ENCODE measurements at regions of chr17 and their contacts with region 1.

Region 1: DNA sequence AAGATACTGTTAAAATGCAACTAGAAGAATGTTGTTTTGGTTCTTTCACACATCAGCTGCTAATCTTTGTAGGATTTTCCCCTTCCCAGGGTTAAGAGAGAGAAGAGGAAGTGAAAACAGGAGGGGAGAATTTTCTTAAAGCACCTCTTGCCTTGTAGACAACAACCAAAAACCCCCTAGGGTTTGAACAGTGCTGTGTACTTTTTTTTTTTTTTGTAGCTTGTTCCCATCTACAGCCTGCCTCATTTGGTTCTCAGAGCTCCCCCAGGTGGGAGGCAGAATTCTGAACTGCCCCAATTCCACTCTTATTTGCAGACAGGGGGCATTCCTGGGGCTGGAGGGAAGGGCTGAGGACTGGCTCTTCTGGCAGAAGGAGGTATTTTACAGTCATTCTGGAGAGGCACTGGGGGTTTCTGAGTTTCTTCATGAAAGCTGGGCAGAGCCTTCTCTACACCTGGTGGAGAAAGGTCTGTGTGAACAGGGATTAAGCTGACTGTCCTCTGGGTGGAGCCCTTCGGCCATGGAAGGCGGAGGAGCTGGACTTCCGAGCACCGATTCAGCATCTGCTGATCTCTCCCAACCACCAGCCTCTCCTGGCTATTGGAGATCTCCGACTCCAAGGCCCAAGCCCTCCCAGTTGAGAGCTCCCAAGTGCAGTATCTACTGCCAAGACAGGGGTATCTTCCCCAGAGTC is 32.2 kb downstream of the SMARCE1 start:
- DNase-seq: peak; percentile 58
- ATAC-seq: peak; percentile 83
- H3K4me3 Mint-ChIP-seq: peak overlapping the region; percentile 77
- H3K27ac Mint-ChIP-seq: peak overlapping the region; percentile 96
- H3K4me1 Mint-ChIP-seq: peaks cover 81% of the 10 kb centered on the region
- H3K27me3 Mint-ChIP-seq: no peaks in the 10 kb centered on the region
- CTCF ChIP-seq: no peak

Region 2: DNA sequence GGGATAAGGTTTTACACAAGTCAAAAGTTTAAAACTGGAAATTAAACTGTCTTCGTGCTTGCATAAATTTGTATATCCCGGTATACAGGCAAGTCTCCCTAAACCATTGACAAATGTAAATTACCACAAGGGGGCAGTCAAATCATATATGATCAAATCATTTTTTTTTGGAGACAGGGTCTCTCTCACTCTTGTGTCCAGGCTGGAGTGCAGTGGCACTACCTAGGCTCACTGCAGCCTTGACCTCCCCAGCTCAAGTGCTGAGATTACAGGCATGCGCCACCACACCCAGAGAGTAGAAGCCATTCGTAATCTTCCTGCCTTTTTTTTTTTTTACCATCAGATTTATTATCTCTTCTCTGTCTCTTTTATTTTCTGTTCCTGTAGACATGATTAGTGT is 216.3 kb before region 1 on chr17:
- CTCF ChIA-PET with region 1: interaction called, 5 read pairs
- POLR2A ChIA-PET with region 1: interaction called, 4 read pairs
- intact Hi-C with region 1: loop called (anchors 1 kb)
- DNase-seq: no peak
- ATAC-seq: peak; percentile 61
- H3K4me3 Mint-ChIP-seq: no peak overlapping the region
- H3K27ac Mint-ChIP-seq: no peak overlapping the region
- H3K4me1 Mint-ChIP-seq: peaks cover 15% of the 10 kb centered on the region
- H3K27me3 Mint-ChIP-seq: no peaks in the 10 kb centered on the region
- CTCF ChIP-seq: no peak

Region 3: DNA sequence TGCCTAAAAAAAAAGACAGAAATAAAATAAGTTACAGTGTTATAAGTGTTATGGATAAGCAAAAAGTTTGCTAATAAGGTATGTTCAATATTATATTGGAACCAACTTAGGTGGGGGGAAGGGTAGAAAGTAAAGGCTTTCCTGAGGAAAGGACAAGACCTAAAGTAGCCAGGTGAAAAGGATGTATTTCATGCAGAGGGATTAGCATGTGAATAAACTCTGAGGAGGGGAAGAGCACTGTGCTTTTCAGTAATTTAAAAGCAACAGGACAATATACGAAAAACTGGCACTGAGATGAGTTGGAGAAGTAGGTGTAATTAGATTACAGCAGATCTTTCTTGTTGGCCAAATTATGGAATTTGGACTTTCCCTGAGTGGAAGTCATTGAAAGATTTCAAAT is 205.4 kb before region 1 on chr17:
- CTCF ChIA-PET with region 1: no interaction called
- POLR2A ChIA-PET with region 1: no interaction called
- intact Hi-C with region 1: no loop called
- DNase-seq: no peak
- ATAC-seq: no peak
- H3K4me3 Mint-ChIP-seq: no peak overlapping the region
- H3K27ac Mint-ChIP-seq: no peak overlapping the region
- H3K4me1 Mint-ChIP-seq: no peaks in the 10 kb centered on the region
- H3K27me3 Mint-ChIP-seq: no peaks in the 10 kb centered on the region
- CTCF ChIP-seq: no peak

Region 4: GRCh38 chr17:40531051-40531991 is 84.1 kb before region 1 on chr17:
- CTCF ChIA-PET with region 1: interaction called, 64 read pairs
- POLR2A ChIA-PET with region 1: interaction called, 117 read pairs
- intact Hi-C with region 1: loop called (anchors 1 kb)
- DNase-seq: no peak
- ATAC-seq: peak; percentile 26
- H3K4me3 Mint-ChIP-seq: peak overlapping the region; percentile 42
- H3K27ac Mint-ChIP-seq: peak overlapping the region; percentile 93
- H3K4me1 Mint-ChIP-seq: peaks cover 61% of the 10 kb centered on the region
- H3K27me3 Mint-ChIP-seq: no peaks in the 10 kb centered on the region
- CTCF ChIP-seq: no peak

Region 5: GRCh38 chr17:40564883-40565768 is 50.3 kb before region 1 on chr17 and contains the start of gene CCR7:
- CTCF ChIA-PET with region 1: interaction called, 426 read pairs
- POLR2A ChIA-PET with region 1: interaction called, 1,885 read pairs
- intact Hi-C with region 1: loop called (anchors 1 kb)
- DNase-seq: peak; percentile 78
- ATAC-seq: peak; percentile 66
- H3K4me3 Mint-ChIP-seq: peak within 1 kb of the TSS; percentile 89
- H3K27ac Mint-ChIP-seq: peak within 1 kb of the TSS; percentile 99
- H3K4me1 Mint-ChIP-seq: peaks cover 74% of the 10 kb centered on the region
- H3K27me3 Mint-ChIP-seq: no peaks in the 10 kb centered on the region
- CTCF ChIP-seq: no peak
- total RNA-seq, gene CCR7: 572 and 573 TPM in 2 replicates

Region 6: DNA sequence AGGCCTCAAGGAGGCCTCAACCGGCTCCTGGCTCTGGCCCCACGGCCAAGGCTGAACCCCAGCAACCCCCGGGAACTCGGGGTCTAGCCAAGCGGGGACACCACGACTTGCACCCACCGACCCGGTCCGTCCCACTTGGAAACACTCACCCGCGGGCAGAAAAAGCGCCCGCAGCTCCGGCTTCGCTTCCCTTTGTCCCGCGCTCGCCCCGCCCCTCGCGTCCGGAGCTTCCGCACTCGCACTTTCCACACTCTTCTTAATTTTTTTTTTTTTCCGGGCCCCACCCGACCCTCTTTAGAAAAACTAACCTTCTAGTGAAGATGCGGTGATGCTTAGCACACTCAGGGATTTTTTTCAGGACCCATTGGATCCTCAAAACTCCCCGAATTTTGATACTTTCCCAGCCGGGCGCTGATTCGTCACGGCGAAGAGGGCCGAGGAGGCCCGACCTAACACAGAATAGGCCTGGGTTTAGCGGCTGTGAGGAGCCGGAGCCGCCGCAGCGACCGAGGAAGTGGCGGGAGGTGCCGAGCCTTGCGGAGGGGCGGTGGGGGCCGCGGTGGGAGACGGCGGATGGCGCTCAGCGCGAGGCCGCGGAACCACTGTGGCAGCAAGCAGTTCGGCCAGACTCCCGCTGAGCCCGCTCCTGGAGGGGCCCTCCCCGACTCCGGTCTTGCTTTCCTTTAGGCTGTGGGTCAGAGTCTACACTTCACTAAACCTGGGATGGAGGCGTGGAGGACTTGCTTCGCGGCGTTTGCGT is 32.4 kb after region 1 on chr17 and contains the start of gene SMARCE1:
- CTCF ChIA-PET with region 1: interaction called, 7 read pairs
- POLR2A ChIA-PET with region 1: interaction called, 85 read pairs
- intact Hi-C with region 1: no loop called
- DNase-seq: peak; percentile 75
- ATAC-seq: peak; percentile 84
- H3K4me3 Mint-ChIP-seq: peak within 1 kb of the TSS; percentile 98
- H3K27ac Mint-ChIP-seq: peak within 1 kb of the TSS; percentile 99
- H3K4me1 Mint-ChIP-seq: peaks cover 48% of the 10 kb centered on the region
- H3K27me3 Mint-ChIP-seq: no peaks in the 10 kb centered on the region
- CTCF ChIP-seq: no peak
- total RNA-seq, gene SMARCE1: 140 TPM in 2 replicates

Region 7: GRCh38 chr17:40659911-40660310 is 44.5 kb after region 1 on chr17:
- CTCF ChIA-PET with region 1: no interaction called
- POLR2A ChIA-PET with region 1: no interaction called
- intact Hi-C with region 1: no loop called
- DNase-seq: no peak
- ATAC-seq: no peak
- H3K4me3 Mint-ChIP-seq: no peak overlapping the region
- H3K27ac Mint-ChIP-seq: no peak overlapping the region
- H3K4me1 Mint-ChIP-seq: peaks cover 3% of the 10 kb centered on the region
- H3K27me3 Mint-ChIP-seq: peaks cover 29% of the 10 kb centered on the region
- CTCF ChIP-seq: no peak

Region 8: GRCh38 chr17:40763752-40764151 is 148.3 kb after region 1 on chr17:
- CTCF ChIA-PET with region 1: no interaction called
- POLR2A ChIA-PET with region 1: no interaction called
- intact Hi-C with region 1: no loop called
- DNase-seq: no peak
- ATAC-seq: no peak
- H3K4me3 Mint-ChIP-seq: no peak overlapping the region
- H3K27ac Mint-ChIP-seq: no peak overlapping the region
- H3K4me1 Mint-ChIP-seq: no peaks in the 10 kb centered on the region
- H3K27me3 Mint-ChIP-seq: peaks cover 21% of the 10 kb centered on the region
- CTCF ChIP-seq: no peak

Region 9: DNA sequence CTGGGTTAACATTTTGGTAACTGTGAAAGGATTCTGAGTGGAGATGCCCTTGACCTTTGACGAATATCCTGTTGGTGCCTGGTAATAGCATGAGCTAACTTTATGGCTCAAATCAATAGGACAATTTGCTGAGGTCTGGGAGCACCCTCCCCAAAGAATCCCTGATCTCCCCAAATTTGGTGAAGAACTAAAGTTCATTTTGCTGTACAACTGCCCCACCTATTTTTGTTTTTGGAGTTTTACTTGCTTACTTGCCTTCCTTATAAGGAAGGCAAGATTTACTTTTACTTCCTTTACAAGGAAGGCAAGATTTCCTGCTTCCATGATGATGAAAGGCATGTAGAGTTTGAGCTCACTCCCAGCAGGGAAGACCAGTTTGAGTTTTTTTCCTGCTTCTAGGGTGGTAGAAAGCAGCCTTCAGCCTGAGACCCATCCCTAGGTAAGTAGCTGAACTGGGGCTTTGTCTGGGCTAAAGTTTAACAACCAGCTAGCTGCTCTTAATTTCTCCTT is 492.6 kb after region 1 on chr17:
- CTCF ChIA-PET with region 1: no interaction called
- POLR2A ChIA-PET with region 1: no interaction called
- intact Hi-C with region 1: no loop called
- DNase-seq: no peak
- ATAC-seq: no peak
- H3K4me3 Mint-ChIP-seq: no peak overlapping the region
- H3K27ac Mint-ChIP-seq: peak overlapping the region; percentile 46
- H3K4me1 Mint-ChIP-seq: peaks cover 15% of the 10 kb centered on the region
- H3K27me3 Mint-ChIP-seq: peaks cover 6% of the 10 kb centered on the region
- CTCF ChIP-seq: no peak

Region 10: GRCh38 chr17:41548844-41549595 is 933.6 kb after region 1 on chr17:
- CTCF ChIA-PET with region 1: interaction called, 9 read pairs
- POLR2A ChIA-PET with region 1: no interaction called
- intact Hi-C with region 1: loop called (anchors 5 kb)
- DNase-seq: peak; percentile 50
- ATAC-seq: peak; percentile 87
- H3K4me3 Mint-ChIP-seq: peak overlapping the region; percentile 44
- H3K27ac Mint-ChIP-seq: no peak overlapping the region
- H3K4me1 Mint-ChIP-seq: peaks cover 8% of the 10 kb centered on the region
- H3K27me3 Mint-ChIP-seq: peaks cover 39% of the 10 kb centered on the region
- CTCF ChIP-seq: no peak

Measured in activated B cell treated with CpG ODN at 0.5 μM for 24 hours (primary cell).